ENCODE measurements at regions of chr6 and their contacts with region 1.

Region 1: GRCh38 chr6:79302341-79302740 is 67.9 kb upstream of the HMGN3 start:
- DNase-seq: no peak
- H3K4me3 ChIP-seq: no peak overlapping the region
- H3K4me3 Mint-ChIP-seq: no peak overlapping the region
- H3K27ac Mint-ChIP-seq: peak overlapping the region; percentile 68
- H3K4me1 ChIP-seq: peaks cover 48% of the 10 kb centered on the region
- H3K4me1 Mint-ChIP-seq: peaks cover 15% of the 10 kb centered on the region
- H3K27me3 ChIP-seq: no peaks in the 10 kb centered on the region
- H3K27me3 Mint-ChIP-seq: no peaks in the 10 kb centered on the region
- CTCF ChIP-seq: no peak

Region 2: DNA sequence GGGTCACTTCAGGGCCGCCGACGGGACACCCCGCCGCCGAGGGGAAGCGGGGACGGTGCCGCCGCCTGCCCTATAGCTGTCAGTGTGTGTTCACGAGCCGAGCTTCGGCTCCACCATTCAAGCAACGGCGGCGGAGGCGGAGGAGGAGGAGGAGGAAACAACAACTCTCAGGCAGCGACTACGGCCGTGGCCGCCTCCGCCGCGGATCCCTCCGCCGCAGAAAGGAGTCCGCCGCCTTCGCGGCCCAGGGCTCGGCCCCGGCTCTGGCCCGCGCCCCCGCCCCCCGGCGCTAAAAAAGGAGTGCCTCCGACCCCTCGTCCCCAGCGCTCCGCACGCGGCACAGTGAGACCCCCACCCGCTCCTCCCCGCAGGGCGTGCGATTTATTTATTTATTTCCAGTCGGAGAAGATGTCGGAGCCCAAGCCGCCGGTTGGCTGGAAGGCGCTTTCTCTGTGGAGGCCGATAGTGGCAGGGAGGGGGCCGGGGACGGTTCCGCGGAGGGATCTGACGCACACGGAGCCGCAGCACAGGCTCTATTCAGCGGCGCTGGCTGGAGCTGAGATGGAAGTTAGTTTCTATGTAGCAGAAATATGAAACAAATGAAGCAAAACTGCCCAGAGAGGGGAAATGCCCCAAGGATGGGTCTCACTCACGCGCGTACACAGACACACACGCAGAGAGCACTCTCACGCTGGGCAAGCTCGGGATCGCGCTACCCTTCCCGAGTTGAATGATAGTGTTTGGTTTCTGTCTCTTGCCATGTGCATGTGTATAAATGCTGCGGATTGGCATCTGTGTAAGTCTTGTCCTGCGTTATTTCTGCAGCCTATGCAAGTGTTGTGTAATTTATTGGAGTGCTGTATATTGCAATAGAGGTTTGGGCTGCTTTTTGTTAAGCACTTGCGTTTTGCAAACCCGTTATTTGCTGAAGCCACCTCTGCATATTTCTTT is 224.0 kb before region 1 on chr6 and contains the start of gene PHIP:
- CTCF ChIA-PET with region 1: no interaction called
- POLR2A ChIA-PET with region 1: no interaction called
- intact Hi-C with region 1: loop called (anchors 1 kb)
- DNase-seq: peak; percentile 94
- H3K4me3 ChIP-seq: peak within 1 kb of the TSS; percentile 79
- H3K4me3 Mint-ChIP-seq: peak within 1 kb of the TSS; percentile 88
- H3K27ac Mint-ChIP-seq: peak within 1 kb of the TSS; percentile 96
- H3K4me1 ChIP-seq: no peaks in the 10 kb centered on the region; the same call in 1 of the 2 replicates
- H3K4me1 Mint-ChIP-seq: peaks cover 7% of the 10 kb centered on the region
- H3K27me3 ChIP-seq: no peaks in the 10 kb centered on the region
- H3K27me3 Mint-ChIP-seq: no peaks in the 10 kb centered on the region
- CTCF ChIP-seq: no peak
- total RNA-seq, gene PHIP: 31.2 and 32.6 TPM in 2 replicates

Region 3: GRCh38 chr6:79257381-79258205 is 44.7 kb before region 1 on chr6:
- CTCF ChIA-PET with region 1: no interaction called
- POLR2A ChIA-PET with region 1: no interaction called
- intact Hi-C with region 1: loop called (anchors 5 kb)
- DNase-seq: no peak
- H3K4me3 ChIP-seq: no peak overlapping the region
- H3K4me3 Mint-ChIP-seq: no peak overlapping the region
- H3K27ac Mint-ChIP-seq: no peak overlapping the region
- H3K4me1 ChIP-seq: peaks cover 9% of the 10 kb centered on the region
- H3K4me1 Mint-ChIP-seq: no peaks in the 10 kb centered on the region
- H3K27me3 ChIP-seq: no peaks in the 10 kb centered on the region
- H3K27me3 Mint-ChIP-seq: no peaks in the 10 kb centered on the region
- CTCF ChIP-seq: no peak

Region 4: DNA sequence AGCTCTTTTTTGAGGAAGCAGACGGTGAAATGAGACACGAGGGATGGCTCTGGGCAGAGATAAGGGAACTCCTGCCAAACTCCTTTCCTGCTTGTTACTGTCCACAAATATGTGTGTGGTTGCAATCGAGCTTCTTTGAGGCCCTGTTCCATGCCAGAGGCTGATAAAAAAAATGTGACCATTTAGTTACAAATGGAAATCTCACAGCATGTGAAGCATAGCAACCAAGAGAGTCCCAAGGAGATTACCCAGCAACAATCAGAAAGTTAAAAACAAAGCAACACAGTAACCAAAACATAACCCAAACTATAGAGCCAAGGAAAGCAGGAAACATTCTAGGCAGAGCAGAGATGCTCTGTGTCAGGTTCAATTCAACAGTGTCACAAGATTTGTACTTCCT is 32.5 kb before region 1 on chr6:
- CTCF ChIA-PET with region 1: no interaction called
- POLR2A ChIA-PET with region 1: no interaction called
- intact Hi-C with region 1: loop called (anchors 2 kb)
- DNase-seq: no peak
- H3K4me3 ChIP-seq: no peak overlapping the region
- H3K4me3 Mint-ChIP-seq: no peak overlapping the region
- H3K27ac Mint-ChIP-seq: no peak overlapping the region
- H3K4me1 ChIP-seq: no peaks in the 10 kb centered on the region
- H3K4me1 Mint-ChIP-seq: no peaks in the 10 kb centered on the region
- H3K27me3 ChIP-seq: no peaks in the 10 kb centered on the region
- H3K27me3 Mint-ChIP-seq: no peaks in the 10 kb centered on the region
- CTCF ChIP-seq: no peak

Region 5: GRCh38 chr6:79313254-79314012 is 11.1 kb after region 1 on chr6:
- CTCF ChIA-PET with region 1: no interaction called
- POLR2A ChIA-PET with region 1: no interaction called
- intact Hi-C with region 1: no loop called
- DNase-seq: peak in 1 of 2 experiments; percentile 17
- H3K4me3 ChIP-seq: no peak overlapping the region
- H3K4me3 Mint-ChIP-seq: no peak overlapping the region
- H3K27ac Mint-ChIP-seq: no peak overlapping the region
- H3K4me1 ChIP-seq: no peaks in the 10 kb centered on the region
- H3K4me1 Mint-ChIP-seq: no peaks in the 10 kb centered on the region
- H3K27me3 ChIP-seq: no peaks in the 10 kb centered on the region
- H3K27me3 Mint-ChIP-seq: no peaks in the 10 kb centered on the region
- CTCF ChIP-seq: no peak

Region 6: GRCh38 chr6:79353226-79353625 is 50.9 kb after region 1 on chr6:
- CTCF ChIA-PET with region 1: no interaction called
- POLR2A ChIA-PET with region 1: no interaction called
- intact Hi-C with region 1: no loop called
- DNase-seq: no peak
- H3K4me3 ChIP-seq: no peak overlapping the region
- H3K4me3 Mint-ChIP-seq: no peak overlapping the region
- H3K27ac Mint-ChIP-seq: no peak overlapping the region
- H3K4me1 ChIP-seq: no peaks in the 10 kb centered on the region
- H3K4me1 Mint-ChIP-seq: no peaks in the 10 kb centered on the region
- H3K27me3 ChIP-seq: no peaks in the 10 kb centered on the region
- H3K27me3 Mint-ChIP-seq: no peaks in the 10 kb centered on the region
- CTCF ChIP-seq: no peak

Measured in Caco-2 (cell line).